ENCODE measurements at regions of chr7 and their contacts with region 1.

Region 1: DNA sequence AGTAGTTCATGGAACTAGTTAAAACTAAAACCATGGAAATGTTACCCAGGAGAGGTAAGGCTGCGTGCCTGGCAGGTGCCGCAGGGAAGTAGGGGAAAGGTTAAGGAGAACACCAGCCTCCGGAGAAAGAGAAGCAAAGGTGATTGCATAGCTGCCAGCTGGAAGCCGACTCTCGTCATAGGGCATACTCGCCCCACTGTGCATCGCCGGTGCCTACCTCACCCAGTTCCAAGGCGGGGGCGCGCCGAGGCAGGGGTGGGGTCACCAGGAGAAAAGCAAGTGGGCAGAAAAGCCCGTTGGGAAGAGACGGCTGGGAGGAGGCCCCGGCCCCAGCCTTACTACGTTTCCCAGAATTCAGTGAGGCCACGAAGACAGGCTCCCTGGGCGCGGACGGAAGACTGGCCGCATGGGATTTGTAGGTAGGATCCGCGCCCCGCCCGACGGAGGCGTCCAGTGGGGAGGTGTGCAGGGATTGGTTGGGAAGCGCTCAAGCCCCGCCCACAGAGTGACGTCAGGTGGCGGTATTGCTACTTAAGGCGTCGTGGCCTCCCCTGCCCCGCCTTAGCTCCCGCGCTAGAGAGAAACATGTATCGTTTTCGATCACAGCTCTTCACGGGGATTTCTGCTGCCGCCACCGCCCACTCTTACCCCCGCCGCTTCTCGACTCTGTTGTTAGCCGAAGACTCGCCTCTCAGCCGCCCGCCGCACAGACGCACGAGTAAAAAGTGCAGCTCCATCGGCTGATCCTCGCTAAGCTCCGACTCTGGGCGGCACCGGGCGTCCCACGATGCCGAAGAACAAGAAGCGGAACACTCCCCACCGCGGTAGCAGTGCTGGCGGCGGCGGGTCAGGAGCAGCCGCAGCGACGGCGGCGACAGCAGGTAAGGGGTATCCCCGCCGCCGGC is at the start of gene IFRD1:
- DNase-seq: peak; percentile 96 to 99 (median 98)
- ATAC-seq: peak; percentile 77 to 78
- H3K4me3 Mint-ChIP-seq: peak within 1 kb of the TSS; percentile 96 to 100 (median 98)
- H3K27ac Mint-ChIP-seq: peak within 1 kb of the TSS; percentile 97 to 100 (median 99)
- H3K4me1 Mint-ChIP-seq: peaks cover 23 to 49% (median 44%) of the 10 kb centered on the region in 4 donors
- H3K27me3 Mint-ChIP-seq: no peaks in the 10 kb centered on the region
- polyA plus RNA-seq, gene IFRD1: 22.1 to 28.8 (median 24.0) TPM

Region 2: GRCh38 chr7:112201411-112201810 is 248.7 kb before region 1 on chr7:
- POLR2A ChIA-PET with region 1: interaction called, 23 read pairs
- DNase-seq: no peak
- ATAC-seq: no peak
- H3K4me3 Mint-ChIP-seq: no peak overlapping the region
- H3K27ac Mint-ChIP-seq: no peak overlapping the region
- H3K4me1 Mint-ChIP-seq: peaks cover 17 to 23% (median 22%) of the 10 kb centered on the region in 4 donors
- H3K27me3 Mint-ChIP-seq: peaks cover 27 to 79% (median 47%) of the 10 kb centered on the region in 5 donors

Region 3: DNA sequence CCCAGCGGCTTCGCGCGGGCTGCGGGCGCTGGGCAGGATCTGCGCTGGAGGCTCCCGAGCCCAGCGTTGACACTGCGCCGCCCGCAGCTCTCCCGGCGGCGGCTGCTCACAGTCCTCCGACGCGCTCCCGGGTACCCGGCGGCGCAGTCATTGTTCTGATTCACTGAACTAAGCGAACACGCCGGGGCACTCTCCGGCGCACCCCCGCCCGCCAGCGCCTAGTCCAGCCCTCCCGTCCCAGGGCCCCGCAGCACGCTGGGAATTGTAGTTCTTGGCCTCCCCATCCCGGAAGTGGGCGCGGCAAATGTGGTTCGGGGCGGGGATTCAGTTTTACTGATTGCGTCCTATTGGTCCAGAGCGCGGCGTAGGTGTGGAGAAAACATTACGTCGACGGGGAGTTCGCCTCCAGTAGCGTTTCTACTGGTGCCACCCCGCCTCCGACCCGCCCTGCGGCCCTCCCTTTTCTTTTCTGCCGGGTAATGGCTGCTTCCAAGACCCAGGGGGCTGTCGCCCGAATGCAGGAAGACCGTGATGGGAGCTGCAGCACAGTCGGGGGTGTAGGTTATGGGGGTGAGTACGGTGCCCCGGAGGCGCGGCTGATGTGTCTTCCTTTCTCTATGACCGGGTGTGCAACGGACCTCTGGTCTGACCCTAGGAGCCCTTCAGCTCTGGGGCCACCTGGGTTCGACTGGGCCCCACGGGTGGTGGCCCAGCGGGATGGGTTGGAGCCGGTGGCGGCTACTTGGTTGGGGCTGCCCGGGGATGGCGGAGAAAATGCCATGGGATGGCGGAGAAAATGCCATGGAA is 243.7 kb before region 1 on chr7 and contains the starts of genes DOCK4 and ZNF277:
- POLR2A ChIA-PET with region 1: interaction called, 23 read pairs
- DNase-seq: peak; percentile 98 to 100 (median 99)
- ATAC-seq: peak; percentile 87 to 89
- H3K4me3 Mint-ChIP-seq: peak within 1 kb of the TSS; percentile 93 to 98 (median 97)
- H3K27ac Mint-ChIP-seq: peak within 1 kb of the TSS; percentile 75 to 96 (median 94)
- H3K4me1 Mint-ChIP-seq: peaks cover 22 to 47% (median 41%) of the 10 kb centered on the region in 4 donors
- H3K27me3 Mint-ChIP-seq: peaks cover 15 to 32% (median 22%) of the 10 kb centered on the region in 5 donors
- polyA plus RNA-seq, gene DOCK4: 0.30 to 0.46 TPM in 2 of 3 donors, not detected in the other
- polyA plus RNA-seq, gene ZNF277: 20.3 to 22.8 (median 22.4) TPM

Region 4: GRCh38 chr7:112422842-112423496 is 27.2 kb before region 1 on chr7:
- POLR2A ChIA-PET with region 1: interaction called, 23 read pairs
- DNase-seq: peak in 1 of 10 donors; percentile 7
- ATAC-seq: no peak
- H3K4me3 Mint-ChIP-seq: peak overlapping the region in 3 of 10 donors; percentile 59 to 69 (median 69)
- H3K27ac Mint-ChIP-seq: peak overlapping the region in 9 of 10 donors; percentile 5 to 89 (median 70)
- H3K4me1 Mint-ChIP-seq: peaks cover 14 to 25% (median 20%) of the 10 kb centered on the region in 4 donors
- H3K27me3 Mint-ChIP-seq: no peaks in the 10 kb centered on the region

Measured in naive thymus-derived CD8-positive, alpha-beta T cell (primary cell).